ENCODE measurements at regions of chr9 and their contacts with region 1.

Region 1: GRCh38 chr9:35732122-35732799 is at the starts of genes CREB3 and TLN1:
- DNase-seq: peak; percentile 96 to 98 (median 98)
- H3K4me3 ChIP-seq: peak within 1 kb of the TSS; percentile 84 to 95
- H3K4me3 Mint-ChIP-seq: peak within 1 kb of the TSS; percentile 89 to 97 (median 94)
- H3K27ac ChIP-seq: peak within 1 kb of the TSS; percentile 92
- H3K27ac Mint-ChIP-seq: peak within 1 kb of the TSS in 6 of 7 donors; percentile 94 to 97 (median 96)
- H3K4me1 ChIP-seq: peaks cover 66% of the 10 kb centered on the region
- H3K4me1 Mint-ChIP-seq: peaks cover 18 to 32% (median 24%) of the 10 kb centered on the region in 4 donors
- H3K27me3 ChIP-seq: no peaks in the 10 kb centered on the region
- H3K27me3 Mint-ChIP-seq: no peaks in the 10 kb centered on the region
- total RNA-seq, gene CREB3: 24.8 to 25.6 TPM
- total RNA-seq, gene TLN1: 294 to 316 TPM

Region 2: DNA sequence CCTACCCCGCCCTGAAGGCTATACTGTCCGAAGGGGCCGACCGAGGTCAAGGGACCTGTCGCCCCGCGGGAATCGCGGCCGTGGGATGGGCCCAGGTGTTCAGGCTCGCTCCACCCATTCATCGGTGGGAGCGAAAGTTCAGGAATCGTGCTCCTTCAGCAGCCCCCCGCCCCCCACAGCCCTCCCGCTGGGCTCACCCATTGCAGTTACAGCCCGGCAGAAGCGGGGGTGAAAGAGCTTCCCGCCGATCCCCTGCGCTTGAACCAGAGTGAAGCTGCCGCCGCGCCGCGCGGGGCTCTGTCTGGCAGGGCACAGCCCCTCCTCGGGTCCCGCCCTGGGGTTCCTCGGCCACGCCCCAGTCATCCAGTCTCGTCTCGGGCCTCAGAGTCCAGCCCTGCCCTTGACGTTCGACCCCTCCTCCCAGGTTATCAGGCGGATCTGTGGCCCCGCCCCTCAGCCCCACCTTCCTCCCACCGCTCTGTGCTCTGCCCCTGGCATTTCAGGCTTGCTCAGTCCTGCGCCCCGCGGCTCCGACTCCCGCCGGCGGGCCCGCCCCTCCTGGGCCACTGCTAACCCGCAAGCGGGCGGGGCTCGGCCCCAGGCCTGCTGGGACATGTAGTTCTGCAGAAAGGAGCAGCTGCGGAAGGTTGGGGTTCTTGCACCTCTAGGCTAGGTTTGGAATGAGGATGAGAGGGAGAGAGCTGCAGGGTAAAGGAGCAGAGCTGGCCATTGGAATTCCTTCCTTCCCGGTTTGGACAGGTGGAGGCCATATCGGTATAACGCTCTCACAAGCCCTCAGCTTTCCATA is 1355.5 kb before region 1 on chr9 and contains the start of gene MYORG:
- CTCF ChIA-PET with region 1: no interaction called
- POLR2A ChIA-PET with region 1: no interaction called
- intact Hi-C with region 1: loop called (anchors 2 kb)
- DNase-seq: peak; percentile 94 to 98 (median 96)
- H3K4me3 ChIP-seq: peak within 1 kb of the TSS; percentile 70 to 77
- H3K4me3 Mint-ChIP-seq: peak within 1 kb of the TSS; percentile 92 to 98 (median 94)
- H3K27ac ChIP-seq: peak within 1 kb of the TSS; percentile 49
- H3K27ac Mint-ChIP-seq: peak within 1 kb of the TSS; percentile 58 to 97 (median 93)
- H3K4me1 ChIP-seq: peaks cover 39% of the 10 kb centered on the region
- H3K4me1 Mint-ChIP-seq: peaks cover 33 to 54% (median 44%) of the 10 kb centered on the region in 4 donors
- H3K27me3 ChIP-seq: no peaks in the 10 kb centered on the region
- H3K27me3 Mint-ChIP-seq: no peaks in the 10 kb centered on the region
- total RNA-seq, gene MYORG: 1.3 to 1.4 TPM

Region 3: DNA sequence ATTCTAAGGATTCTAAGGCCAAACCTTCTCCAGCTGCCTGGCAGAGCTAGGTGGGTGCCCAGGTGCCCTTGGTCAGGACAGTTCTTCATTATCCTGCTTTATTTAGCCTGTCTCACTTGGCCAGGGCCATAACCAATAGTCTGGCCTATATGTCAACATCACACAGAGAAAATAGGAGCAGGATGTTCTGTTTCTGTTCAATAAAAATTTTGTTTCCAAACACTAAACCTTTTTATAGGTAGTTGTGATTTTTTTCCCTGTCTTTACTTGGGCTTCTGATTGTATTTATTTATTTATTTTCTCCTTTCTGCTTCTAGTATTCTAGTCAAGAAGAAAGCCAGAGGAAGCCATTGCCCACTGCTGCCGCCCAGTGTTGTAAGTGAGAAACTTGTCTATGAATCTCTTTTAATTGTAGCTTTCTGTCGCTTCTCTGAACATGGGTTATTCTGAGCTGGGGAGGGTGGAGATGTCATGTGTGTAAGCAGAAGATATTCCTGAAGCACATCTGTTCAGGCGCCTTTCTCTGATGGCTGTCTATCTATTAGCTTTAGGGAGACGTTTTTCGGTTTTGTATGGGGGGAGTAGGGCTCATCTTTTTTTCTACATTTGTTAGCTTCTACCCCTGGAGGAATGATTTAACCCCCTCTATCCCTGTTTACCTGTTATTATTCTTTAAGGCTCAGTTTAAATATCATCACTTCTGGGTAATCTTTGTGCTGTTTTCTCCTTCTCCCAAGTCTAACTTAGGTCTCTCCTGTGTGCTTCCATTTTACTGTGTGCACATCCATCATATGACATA is 473.4 kb before region 1 on chr9:
- CTCF ChIA-PET with region 1: no interaction called
- POLR2A ChIA-PET with region 1: no interaction called
- intact Hi-C with region 1: no loop called
- DNase-seq: peak; percentile 35 to 43 (median 39)
- H3K4me3 ChIP-seq: no peak overlapping the region
- H3K4me3 Mint-ChIP-seq: no peak overlapping the region
- H3K27ac ChIP-seq: no peak overlapping the region
- H3K27ac Mint-ChIP-seq: peak overlapping the region in 1 of 7 donors; percentile 25
- H3K4me1 ChIP-seq: no peaks in the 10 kb centered on the region
- H3K4me1 Mint-ChIP-seq: no peaks in the 10 kb centered on the region
- H3K27me3 ChIP-seq: no peaks in the 10 kb centered on the region
- H3K27me3 Mint-ChIP-seq: peaks cover 0 to 1% of the 10 kb centered on the region in 2 donors

Region 4: DNA sequence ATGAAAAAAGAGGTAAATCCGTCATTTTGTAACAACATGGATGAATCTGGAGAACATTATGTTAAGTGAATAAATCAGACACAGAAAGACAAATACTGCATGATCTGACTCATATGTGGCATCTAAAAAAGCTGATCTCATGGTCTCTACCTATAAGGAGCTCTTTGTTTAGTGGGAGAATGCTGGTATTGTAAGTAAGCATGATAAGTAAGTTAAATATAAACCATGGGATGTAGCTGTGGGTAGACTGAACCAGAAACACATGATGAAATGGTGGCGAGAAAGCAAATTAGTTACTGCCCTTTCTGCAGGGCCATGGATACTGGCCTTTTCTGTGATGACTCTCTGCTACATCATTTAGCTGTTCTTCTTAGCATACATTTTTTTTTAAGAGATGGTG is 308.8 kb before region 1 on chr9:
- CTCF ChIA-PET with region 1: no interaction called
- POLR2A ChIA-PET with region 1: no interaction called
- intact Hi-C with region 1: no loop called
- DNase-seq: no peak
- H3K4me3 ChIP-seq: no peak overlapping the region
- H3K4me3 Mint-ChIP-seq: no peak overlapping the region
- H3K27ac ChIP-seq: no peak overlapping the region
- H3K27ac Mint-ChIP-seq: no peak overlapping the region
- H3K4me1 ChIP-seq: no peaks in the 10 kb centered on the region
- H3K4me1 Mint-ChIP-seq: no peaks in the 10 kb centered on the region
- H3K27me3 ChIP-seq: no peaks in the 10 kb centered on the region
- H3K27me3 Mint-ChIP-seq: peaks cover 26 to 33% of the 10 kb centered on the region in 2 donors

Region 5: GRCh38 chr9:35603987-35604577 is 128.2 kb before region 1 on chr9:
- CTCF ChIA-PET with region 1: interaction called, 10 read pairs
- POLR2A ChIA-PET with region 1: interaction called, 43 read pairs
- intact Hi-C with region 1: loop called (anchors 1 kb)
- DNase-seq: peak; percentile 98 to 99 (median 99)
- H3K4me3 ChIP-seq: peak overlapping the region; percentile 75 to 84
- H3K4me3 Mint-ChIP-seq: peak overlapping the region; percentile 95 to 100 (median 98)
- H3K27ac ChIP-seq: peak overlapping the region; percentile 85
- H3K27ac Mint-ChIP-seq: peak overlapping the region; percentile 96 to 100 (median 99)
- H3K4me1 ChIP-seq: peaks cover 37% of the 10 kb centered on the region
- H3K4me1 Mint-ChIP-seq: peaks cover 25 to 47% (median 32%) of the 10 kb centered on the region in 4 donors
- H3K27me3 ChIP-seq: no peaks in the 10 kb centered on the region
- H3K27me3 Mint-ChIP-seq: no peaks in the 10 kb centered on the region

Region 6: DNA sequence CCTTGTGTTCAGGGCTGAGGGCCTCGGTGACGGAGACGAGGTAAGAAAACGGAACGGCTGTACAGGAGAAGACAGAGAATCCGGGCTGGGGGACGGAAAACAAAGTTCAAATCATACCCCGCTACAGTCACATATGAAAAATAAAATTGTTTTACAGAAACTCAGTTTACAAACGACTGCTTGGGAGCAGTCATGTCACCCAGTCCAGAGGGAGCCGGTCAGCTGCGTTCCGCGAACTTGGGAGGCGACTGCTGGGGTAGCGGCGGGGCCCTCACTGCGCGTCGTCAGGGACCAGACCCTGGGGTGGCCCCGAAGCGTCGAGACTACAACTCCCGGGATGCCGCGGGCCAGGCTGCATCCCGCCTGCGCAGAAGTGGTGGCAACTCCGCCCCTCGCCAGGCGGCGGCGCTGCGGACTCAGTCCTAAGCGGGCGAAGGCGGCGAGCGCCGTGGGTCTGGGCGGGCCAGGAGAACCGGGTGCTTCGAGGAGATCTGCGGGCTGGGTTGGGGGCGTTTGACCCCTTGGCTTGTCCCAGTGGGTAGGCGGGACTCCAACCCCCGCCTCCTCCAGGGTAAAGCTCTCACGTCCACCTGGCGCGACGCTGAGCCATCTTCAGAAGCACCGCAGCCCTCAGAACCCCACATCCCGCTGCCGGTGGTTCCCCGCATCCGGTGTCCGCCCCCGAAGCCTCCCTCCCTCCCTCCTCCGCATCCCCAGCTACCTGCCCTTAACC is 85.6 kb before region 1 on chr9:
- CTCF ChIA-PET with region 1: interaction called, 249 read pairs
- POLR2A ChIA-PET with region 1: interaction called, 174 read pairs
- intact Hi-C with region 1: loop called (anchors 1 kb)
- DNase-seq: peak; percentile 91 to 95 (median 91)
- H3K4me3 ChIP-seq: peak overlapping the region; percentile 78 to 96
- H3K4me3 Mint-ChIP-seq: peak overlapping the region; percentile 93 to 98 (median 94)
- H3K27ac ChIP-seq: peak overlapping the region; percentile 88
- H3K27ac Mint-ChIP-seq: peak overlapping the region; percentile 89 to 99 (median 97)
- H3K4me1 ChIP-seq: peaks cover 56% of the 10 kb centered on the region
- H3K4me1 Mint-ChIP-seq: peaks cover 29 to 87% (median 47%) of the 10 kb centered on the region in 4 donors
- H3K27me3 ChIP-seq: no peaks in the 10 kb centered on the region
- H3K27me3 Mint-ChIP-seq: no peaks in the 10 kb centered on the region

Region 7: GRCh38 chr9:35690431-35691333 is 41.6 kb before region 1 on chr9:
- CTCF ChIA-PET with region 1: interaction called, 118 read pairs
- POLR2A ChIA-PET with region 1: interaction called, 33 read pairs
- intact Hi-C with region 1: no loop called
- DNase-seq: peak in 3 of 5 donors; percentile 28 to 59 (median 32)
- H3K4me3 ChIP-seq: peak overlapping the region in 1 of 2 donors; percentile 58
- H3K4me3 Mint-ChIP-seq: peak overlapping the region; percentile 82 to 90 (median 88)
- H3K27ac ChIP-seq: peak overlapping the region; percentile 59
- H3K27ac Mint-ChIP-seq: peak overlapping the region; percentile 70 to 92 (median 81)
- H3K4me1 ChIP-seq: peaks cover 6% of the 10 kb centered on the region
- H3K4me1 Mint-ChIP-seq: peaks cover 6 to 33% (median 16%) of the 10 kb centered on the region in 4 donors
- H3K27me3 ChIP-seq: no peaks in the 10 kb centered on the region
- H3K27me3 Mint-ChIP-seq: no peaks in the 10 kb centered on the region

Region 8: GRCh38 chr9:35716230-35716629 is 16.0 kb before region 1 on chr9:
- CTCF ChIA-PET with region 1: interaction called, 4 read pairs
- POLR2A ChIA-PET with region 1: interaction called, 11 read pairs
- intact Hi-C with region 1: no loop called
- DNase-seq: no peak
- H3K4me3 ChIP-seq: no peak overlapping the region
- H3K4me3 Mint-ChIP-seq: no peak overlapping the region
- H3K27ac ChIP-seq: no peak overlapping the region
- H3K27ac Mint-ChIP-seq: peak overlapping the region in 5 of 7 donors; percentile 15 to 94 (median 52)
- H3K4me1 ChIP-seq: no peaks in the 10 kb centered on the region
- H3K4me1 Mint-ChIP-seq: no peaks in the 10 kb centered on the region
- H3K27me3 ChIP-seq: no peaks in the 10 kb centered on the region
- H3K27me3 Mint-ChIP-seq: no peaks in the 10 kb centered on the region

Region 9: GRCh38 chr9:35814841-35815543 is 82.7 kb after region 1 on chr9 and contains the start of gene HINT2:
- CTCF ChIA-PET with region 1: interaction called, 3 read pairs
- POLR2A ChIA-PET with region 1: interaction called, 47 read pairs
- intact Hi-C with region 1: loop called (anchors 1 kb)
- DNase-seq: peak; percentile 96 to 99 (median 98)
- H3K4me3 ChIP-seq: peak within 1 kb of the TSS; percentile 95 to 100
- H3K4me3 Mint-ChIP-seq: peak within 1 kb of the TSS; percentile 89 to 98 (median 95)
- H3K27ac ChIP-seq: peak within 1 kb of the TSS; percentile 70
- H3K27ac Mint-ChIP-seq: peak within 1 kb of the TSS; percentile 91 to 98 (median 96)
- H3K4me1 ChIP-seq: peaks cover 34% of the 10 kb centered on the region
- H3K4me1 Mint-ChIP-seq: peaks cover 20 to 50% (median 36%) of the 10 kb centered on the region in 4 donors
- H3K27me3 ChIP-seq: no peaks in the 10 kb centered on the region
- H3K27me3 Mint-ChIP-seq: no peaks in the 10 kb centered on the region
- total RNA-seq, gene HINT2: 22.9 to 30.2 TPM

Measured in CD4-positive, alpha-beta memory T cell (primary cell).